ENCODE measurements at regions of chr3 and their contacts with region 1.

Region 1: DNA sequence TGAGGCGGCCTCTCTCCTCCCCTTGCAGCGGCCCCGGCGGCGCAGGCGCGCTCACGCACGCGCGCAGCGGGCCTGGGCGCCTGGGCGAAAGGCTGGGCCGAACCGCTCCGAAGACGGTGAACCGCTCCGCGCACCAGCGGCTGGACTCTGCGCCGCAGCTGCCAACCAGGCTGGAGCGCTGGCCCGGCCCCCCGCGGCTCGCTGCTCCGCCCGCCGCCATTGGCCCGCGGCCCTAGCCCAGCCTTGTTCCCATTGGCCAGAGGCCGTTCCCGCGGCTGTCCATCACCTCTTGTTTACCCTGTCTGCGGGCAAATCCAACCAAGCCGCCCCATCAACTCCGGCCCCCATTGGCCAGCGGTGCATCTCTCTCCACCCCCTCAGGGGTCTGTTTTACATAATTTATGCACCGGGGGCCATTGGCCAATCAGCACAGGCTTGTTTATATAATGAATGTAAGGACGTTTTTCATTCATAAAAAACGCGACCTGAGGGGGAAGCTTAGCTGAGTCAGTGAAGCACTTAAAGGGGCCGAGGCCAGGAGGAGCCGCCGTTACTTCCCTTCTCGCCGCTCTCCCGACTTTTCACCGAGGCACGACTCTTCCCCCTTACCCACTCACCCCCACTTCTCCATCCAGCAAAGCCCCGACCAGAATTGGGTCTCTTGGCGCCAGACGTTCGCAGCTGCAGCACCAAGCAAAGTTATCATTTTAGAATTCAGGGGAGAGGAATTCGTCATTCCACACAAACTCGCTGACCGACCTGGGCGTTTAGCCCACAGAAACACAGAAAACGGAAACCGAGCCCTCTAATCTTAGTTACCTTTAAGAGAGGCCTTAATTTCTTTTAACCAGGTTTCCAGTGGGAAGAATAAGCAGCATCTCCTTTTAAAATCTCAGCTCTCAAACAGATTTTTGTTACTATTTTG is at the start of gene ETV5:
- DNase-seq: peak; percentile 97
- H3K4me3 Mint-ChIP-seq: peak within 1 kb of the TSS; percentile 89
- H3K27ac Mint-ChIP-seq: peak within 1 kb of the TSS; percentile 63
- H3K4me1 Mint-ChIP-seq: peaks cover 31% of the 10 kb centered on the region
- H3K27me3 Mint-ChIP-seq: peaks cover 76% of the 10 kb centered on the region
- total RNA-seq, gene ETV5: 2.2 and 2.5 TPM in 2 replicates

Region 2: DNA sequence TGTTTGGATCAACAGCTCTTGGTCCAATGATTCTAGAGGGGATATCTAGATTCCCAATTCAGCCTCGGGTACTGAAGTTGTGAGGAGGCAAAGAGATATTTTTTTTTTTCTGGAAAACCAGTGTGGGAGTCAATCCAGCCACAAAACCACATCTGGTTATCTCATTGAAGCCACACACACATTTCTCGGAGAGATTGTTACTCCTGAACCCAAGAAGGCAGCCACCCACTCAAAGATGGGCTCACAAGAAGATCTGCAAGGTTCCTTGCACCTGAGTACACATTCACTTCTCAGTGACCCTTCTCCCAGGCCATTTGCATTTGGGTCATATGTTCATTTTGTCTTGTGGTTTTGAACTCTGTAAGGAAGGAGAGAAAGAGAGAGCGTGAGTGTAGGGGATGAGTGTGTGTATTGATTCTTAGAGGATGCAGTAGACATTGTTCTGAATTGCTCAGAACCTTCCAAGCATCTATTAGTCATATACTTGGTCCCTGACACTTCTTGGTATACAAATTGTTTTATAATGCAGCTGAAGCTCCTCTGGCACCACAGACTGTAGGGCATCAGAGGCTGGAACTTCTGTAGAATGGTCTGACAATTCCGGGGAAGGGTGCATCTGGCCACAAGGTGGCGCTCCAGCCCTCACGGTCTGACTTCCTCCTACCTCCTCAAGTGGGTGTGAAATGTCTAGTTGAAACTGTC is 132.1 kb before region 1 on chr3:
- intact Hi-C with region 1: loop called (anchors 1 kb)
- DNase-seq: peak; percentile 94
- H3K4me3 Mint-ChIP-seq: peak overlapping the region; percentile 44
- H3K27ac Mint-ChIP-seq: peak overlapping the region; percentile 68
- H3K4me1 Mint-ChIP-seq: peaks cover 16% of the 10 kb centered on the region
- H3K27me3 Mint-ChIP-seq: peaks cover 41% of the 10 kb centered on the region

Region 3: DNA sequence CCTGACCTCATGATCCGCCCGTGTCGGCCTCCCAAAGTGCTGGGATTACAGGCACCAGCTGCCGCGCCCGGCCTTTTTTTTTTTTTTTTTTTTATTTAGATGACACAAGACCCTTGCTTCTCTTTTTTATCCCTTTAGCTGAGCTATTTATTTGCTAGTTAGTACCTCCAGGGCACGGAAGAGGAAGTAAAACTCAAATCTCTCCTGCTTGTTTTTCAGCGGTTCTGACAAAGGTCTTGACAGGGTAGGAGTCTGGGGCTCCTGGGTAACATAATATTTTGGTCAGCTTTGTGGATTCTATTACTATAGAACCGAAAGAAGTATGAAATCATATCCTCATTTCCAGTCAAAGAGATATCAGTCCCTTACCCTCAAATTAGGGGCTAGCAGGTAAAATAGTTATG is 43.7 kb after region 1 on chr3:
- intact Hi-C with region 1: loop called (anchors 2 kb)
- DNase-seq: no peak
- H3K4me3 Mint-ChIP-seq: no peak overlapping the region
- H3K27ac Mint-ChIP-seq: no peak overlapping the region
- H3K4me1 Mint-ChIP-seq: peaks cover 15% of the 10 kb centered on the region
- H3K27me3 Mint-ChIP-seq: peaks cover 40% of the 10 kb centered on the region

Region 4: GRCh38 chr3:186361762-186362536 is 252.7 kb after region 1 on chr3 and contains the start of gene DGKG:
- intact Hi-C with region 1: loop called (anchors 10 kb)
- DNase-seq: peak; percentile 60
- H3K4me3 Mint-ChIP-seq: peak within 1 kb of the TSS; percentile 46
- H3K27ac Mint-ChIP-seq: no peak within 1 kb of the TSS
- H3K4me1 Mint-ChIP-seq: peaks cover 3% of the 10 kb centered on the region
- H3K27me3 Mint-ChIP-seq: peaks cover 56% of the 10 kb centered on the region
- total RNA-seq, gene DGKG: 0.14 and 0.28 TPM in 2 replicates

Region 5: GRCh38 chr3:186502138-186502948 is 393.1 kb after region 1 on chr3:
- intact Hi-C with region 1: no loop called
- DNase-seq: no peak
- H3K4me3 Mint-ChIP-seq: no peak overlapping the region
- H3K27ac Mint-ChIP-seq: peak overlapping the region; percentile 38
- H3K4me1 Mint-ChIP-seq: peaks cover 8% of the 10 kb centered on the region
- H3K27me3 Mint-ChIP-seq: peaks cover 4% of the 10 kb centered on the region

Measured in activated CD4-positive, alpha-beta T cell treated with anti-CD3 and anti-CD28 coated beads, Interleukin-2, amount 10 ng/mL, durations not matched to agents 24 days and 14 days (primary cell).